ENCODE measurements at regions of chr22 and their contacts with region 1.

Region 1: GRCh38 chr22:41940832-41941765 is 5.9 kb downstream of the CENPM start:
- DNase-seq: peak; percentile 91
- H3K4me3 Mint-ChIP-seq: peak overlapping the region; percentile 69
- H3K27ac Mint-ChIP-seq: peak overlapping the region; percentile 100
- H3K4me1 Mint-ChIP-seq: peaks cover 69% of the 10 kb centered on the region
- H3K27me3 Mint-ChIP-seq: no peaks in the 10 kb centered on the region

Region 2: GRCh38 chr22:41688365-41689211 is 252.5 kb before region 1 on chr22 and contains the start of gene SNU13:
- CTCF ChIA-PET with region 1: interaction called, 3 read pairs
- intact Hi-C with region 1: loop called (anchors 1 kb)
- DNase-seq: peak; percentile 96
- H3K4me3 Mint-ChIP-seq: peak within 1 kb of the TSS; percentile 97
- H3K27ac Mint-ChIP-seq: peak within 1 kb of the TSS; percentile 97
- H3K4me1 Mint-ChIP-seq: peaks cover 39% of the 10 kb centered on the region
- H3K27me3 Mint-ChIP-seq: no peaks in the 10 kb centered on the region
- total RNA-seq, gene SNU13: 265 to 277 TPM

Region 3: GRCh38 chr22:41780746-41781505 is 160.2 kb before region 1 on chr22:
- CTCF ChIA-PET with region 1: interaction called, 3 read pairs
- intact Hi-C with region 1: loop called (anchors 1 kb)
- DNase-seq: peak; percentile 98
- H3K4me3 Mint-ChIP-seq: peak overlapping the region; percentile 86
- H3K27ac Mint-ChIP-seq: peak overlapping the region; percentile 95
- H3K4me1 Mint-ChIP-seq: peaks cover 49% of the 10 kb centered on the region
- H3K27me3 Mint-ChIP-seq: no peaks in the 10 kb centered on the region

Region 4: GRCh38 chr22:41832553-41833368 is 108.3 kb before region 1 on chr22 and contains the start of gene SREBF2:
- CTCF ChIA-PET with region 1: interaction called, 5 read pairs
- intact Hi-C with region 1: loop called (anchors 1 kb)
- DNase-seq: peak; percentile 100
- H3K4me3 Mint-ChIP-seq: peak within 1 kb of the TSS; percentile 98
- H3K27ac Mint-ChIP-seq: peak within 1 kb of the TSS; percentile 100
- H3K4me1 Mint-ChIP-seq: peaks cover 42% of the 10 kb centered on the region
- H3K27me3 Mint-ChIP-seq: no peaks in the 10 kb centered on the region
- total RNA-seq, gene SREBF2: 143 to 147 TPM

Region 5: GRCh38 chr22:41857155-41857859 is 83.8 kb before region 1 on chr22:
- CTCF ChIA-PET with region 1: interaction called, 9 read pairs
- intact Hi-C with region 1: loop called (anchors 1 kb)
- DNase-seq: peak; percentile 93
- H3K4me3 Mint-ChIP-seq: peak overlapping the region; percentile 11
- H3K27ac Mint-ChIP-seq: peak overlapping the region; percentile 95
- H3K4me1 Mint-ChIP-seq: peaks cover 77% of the 10 kb centered on the region
- H3K27me3 Mint-ChIP-seq: no peaks in the 10 kb centered on the region

Region 6: GRCh38 chr22:41888627-41889200 is 52.4 kb before region 1 on chr22:
- CTCF ChIA-PET with region 1: no interaction called
- intact Hi-C with region 1: no loop called
- DNase-seq: no peak
- H3K4me3 Mint-ChIP-seq: no peak overlapping the region
- H3K27ac Mint-ChIP-seq: no peak overlapping the region
- H3K4me1 Mint-ChIP-seq: no peaks in the 10 kb centered on the region
- H3K27me3 Mint-ChIP-seq: no peaks in the 10 kb centered on the region

Region 7: GRCh38 chr22:41908411-41909309 is 32.4 kb before region 1 on chr22:
- CTCF ChIA-PET with region 1: no interaction called
- intact Hi-C with region 1: no loop called
- DNase-seq: no peak
- H3K4me3 Mint-ChIP-seq: no peak overlapping the region
- H3K27ac Mint-ChIP-seq: no peak overlapping the region
- H3K4me1 Mint-ChIP-seq: peaks cover 21% of the 10 kb centered on the region
- H3K27me3 Mint-ChIP-seq: peaks cover 29% of the 10 kb centered on the region

Region 8: DNA sequence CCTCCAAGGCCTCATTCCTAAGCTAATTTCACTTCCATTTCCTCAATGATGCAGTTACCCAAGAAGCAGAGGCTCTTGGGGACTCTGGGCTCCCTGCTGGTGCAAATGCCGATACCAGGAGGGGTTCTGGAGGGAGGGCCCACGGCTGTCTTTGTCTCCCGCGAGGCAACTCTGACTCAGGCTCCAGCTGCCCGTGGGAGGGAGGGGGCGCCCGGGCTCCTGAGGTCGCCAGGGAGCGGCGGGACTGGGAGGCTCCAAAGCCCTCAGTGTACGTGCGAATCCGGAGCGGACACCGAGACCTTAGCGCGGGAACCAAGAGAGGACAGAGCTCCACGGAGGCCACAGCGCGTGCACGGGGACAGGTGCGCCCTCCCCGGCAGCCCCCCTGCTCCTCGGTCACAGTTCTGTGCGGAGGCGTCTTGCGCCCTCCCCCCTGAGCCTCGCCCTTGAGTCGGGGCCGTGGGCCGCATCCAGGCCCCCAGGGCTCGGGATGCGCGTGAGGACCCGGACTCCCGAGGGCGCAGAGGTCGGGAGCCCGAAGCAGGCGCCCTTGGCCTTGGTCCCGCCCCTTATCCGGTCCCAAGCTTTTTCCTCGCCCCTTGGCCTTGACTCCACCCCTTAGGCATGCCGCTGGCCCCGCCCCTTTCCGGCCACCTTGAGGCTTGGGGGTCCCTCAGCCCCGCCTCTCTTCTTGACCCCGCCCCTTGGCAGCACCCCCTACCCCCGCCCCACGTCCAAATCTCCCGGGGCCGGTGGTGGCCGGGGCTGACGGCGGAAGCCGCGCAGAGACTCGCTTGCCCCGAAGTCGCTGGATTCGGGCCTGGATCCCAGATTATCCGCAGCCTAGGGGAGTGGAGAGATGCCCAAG is 21.5 kb before region 1 on chr22:
- CTCF ChIA-PET with region 1: interaction called, 9 read pairs
- intact Hi-C with region 1: loop called (anchors 1 kb)
- DNase-seq: peak; percentile 62
- H3K4me3 Mint-ChIP-seq: peak overlapping the region; percentile 56
- H3K27ac Mint-ChIP-seq: no peak overlapping the region
- H3K4me1 Mint-ChIP-seq: peaks cover 17% of the 10 kb centered on the region
- H3K27me3 Mint-ChIP-seq: peaks cover 21% of the 10 kb centered on the region

Region 9: DNA sequence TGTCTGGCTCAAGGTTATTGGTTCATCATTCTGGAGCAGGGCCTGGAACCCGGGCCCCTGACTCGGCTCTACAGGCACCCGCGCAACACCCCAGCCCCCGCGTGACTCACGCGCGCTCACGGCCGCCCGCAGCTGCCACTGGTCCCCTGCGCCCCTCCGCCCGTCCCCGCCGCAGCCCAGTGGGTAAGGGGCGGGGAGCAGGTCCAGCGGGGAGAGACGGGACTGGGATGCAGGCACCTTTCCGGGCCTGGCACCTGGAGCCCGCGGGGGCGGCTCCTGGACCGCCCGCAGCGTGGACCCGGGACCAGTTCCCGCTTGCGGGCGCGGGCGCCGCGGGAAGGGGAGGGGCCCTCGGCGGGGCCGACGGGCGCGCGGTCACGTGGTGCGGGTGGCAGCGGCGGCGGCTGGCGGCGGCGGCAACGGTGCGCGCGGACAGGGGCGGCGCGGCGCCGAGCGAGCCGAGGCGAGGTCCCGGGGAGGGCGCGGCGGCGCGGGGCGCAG is 35.4 kb after region 1 on chr22:
- CTCF ChIA-PET with region 1: no interaction called
- intact Hi-C with region 1: no loop called
- DNase-seq: peak; percentile 56
- H3K4me3 Mint-ChIP-seq: peak overlapping the region; percentile 68
- H3K27ac Mint-ChIP-seq: no peak overlapping the region
- H3K4me1 Mint-ChIP-seq: peaks cover 12% of the 10 kb centered on the region
- H3K27me3 Mint-ChIP-seq: peaks cover 48% of the 10 kb centered on the region